Activated CD4-positive, alpha-beta memory T cell treated with anti-CD3 and anti-CD28 coated beads for 36 hours (primary cell): ENCODE measurements at regions of chr7 and their contacts with region 1.

Region 1: GRCh38 chr7:38215735-38216670 is 38.0 kb downstream of the STARD3NL start:
- DNase-seq: peak; percentile 85
- H3K4me3 Mint-ChIP-seq: no peak overlapping the region
- H3K27ac Mint-ChIP-seq: no peak overlapping the region
- H3K4me1 Mint-ChIP-seq: peaks cover 43% of the 10 kb centered on the region
- H3K27me3 Mint-ChIP-seq: no peaks in the 10 kb centered on the region

Region 2: GRCh38 chr7:38052786-38053185 is 163.2 kb before region 1 on chr7:
- CTCF ChIA-PET with region 1: no interaction called
- POLR2A ChIA-PET with region 1: no interaction called
- intact Hi-C with region 1: no loop called
- DNase-seq: no peak
- H3K4me3 Mint-ChIP-seq: no peak overlapping the region
- H3K27ac Mint-ChIP-seq: no peak overlapping the region
- H3K4me1 Mint-ChIP-seq: no peaks in the 10 kb centered on the region
- H3K27me3 Mint-ChIP-seq: peaks cover 7% of the 10 kb centered on the region

Region 3: DNA sequence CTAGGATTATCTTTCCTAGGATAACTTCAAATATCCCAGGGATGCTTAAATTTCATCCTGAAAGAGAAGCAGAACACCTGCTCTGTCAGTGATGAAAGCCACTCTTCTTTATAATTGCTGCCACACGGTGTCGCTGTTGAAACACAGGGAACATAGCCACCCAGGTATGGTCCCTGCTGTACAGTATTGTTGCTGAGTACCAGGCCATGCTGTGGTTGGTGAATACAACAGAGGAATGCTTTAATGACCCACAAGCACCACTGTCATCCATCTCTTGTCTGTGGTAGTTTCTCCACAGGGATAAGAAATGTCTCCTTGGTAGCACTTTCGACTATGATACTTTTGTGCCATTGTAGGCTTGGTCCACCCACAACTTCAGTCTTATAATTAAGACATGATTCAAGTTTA is 108.5 kb before region 1 on chr7:
- CTCF ChIA-PET with region 1: interaction called, 98 read pairs
- POLR2A ChIA-PET with region 1: interaction called, 3 read pairs
- intact Hi-C with region 1: loop called (anchors 1 kb)
- DNase-seq: peak; percentile 73
- H3K4me3 Mint-ChIP-seq: no peak overlapping the region
- H3K27ac Mint-ChIP-seq: no peak overlapping the region
- H3K4me1 Mint-ChIP-seq: no peaks in the 10 kb centered on the region
- H3K27me3 Mint-ChIP-seq: peaks cover 13% of the 10 kb centered on the region

Region 4: DNA sequence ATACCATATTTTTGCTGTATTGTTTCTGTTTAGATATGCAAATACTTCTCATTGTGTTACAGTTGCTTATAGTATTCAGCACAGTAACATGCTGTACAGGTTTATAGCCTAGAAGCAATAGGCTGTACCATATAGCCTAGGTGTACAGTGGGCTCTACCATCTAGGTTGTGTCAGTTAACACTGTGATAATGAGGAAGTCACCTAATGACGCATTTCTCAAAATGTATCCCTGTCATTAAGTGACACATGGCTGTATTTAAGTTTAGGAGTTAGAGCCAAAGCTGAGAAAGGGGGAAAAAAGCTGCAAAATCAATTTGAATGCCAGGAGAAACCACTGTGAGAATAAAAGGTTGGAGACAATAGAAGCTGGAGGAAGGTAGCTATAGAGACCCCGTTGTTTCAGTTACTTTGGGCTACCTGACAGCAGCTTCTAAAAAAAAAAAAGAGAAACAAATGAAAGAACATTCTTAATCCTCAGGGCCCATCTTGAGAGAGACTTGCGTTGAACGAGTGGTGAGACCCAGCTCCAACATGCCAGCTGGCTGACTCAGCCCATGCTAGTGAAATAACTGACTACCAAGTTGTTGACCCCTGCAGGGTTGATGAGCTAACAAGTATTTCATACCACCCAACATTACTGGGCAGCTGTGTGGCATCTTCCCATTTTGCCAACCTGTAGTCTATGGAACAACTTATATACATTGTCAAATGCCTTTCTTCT is 29.2 kb before region 1 on chr7:
- CTCF ChIA-PET with region 1: interaction called, 31 read pairs
- POLR2A ChIA-PET with region 1: no interaction called
- intact Hi-C with region 1: no loop called
- DNase-seq: no peak
- H3K4me3 Mint-ChIP-seq: no peak overlapping the region
- H3K27ac Mint-ChIP-seq: no peak overlapping the region
- H3K4me1 Mint-ChIP-seq: peaks cover 33% of the 10 kb centered on the region
- H3K27me3 Mint-ChIP-seq: no peaks in the 10 kb centered on the region

Region 5: DNA sequence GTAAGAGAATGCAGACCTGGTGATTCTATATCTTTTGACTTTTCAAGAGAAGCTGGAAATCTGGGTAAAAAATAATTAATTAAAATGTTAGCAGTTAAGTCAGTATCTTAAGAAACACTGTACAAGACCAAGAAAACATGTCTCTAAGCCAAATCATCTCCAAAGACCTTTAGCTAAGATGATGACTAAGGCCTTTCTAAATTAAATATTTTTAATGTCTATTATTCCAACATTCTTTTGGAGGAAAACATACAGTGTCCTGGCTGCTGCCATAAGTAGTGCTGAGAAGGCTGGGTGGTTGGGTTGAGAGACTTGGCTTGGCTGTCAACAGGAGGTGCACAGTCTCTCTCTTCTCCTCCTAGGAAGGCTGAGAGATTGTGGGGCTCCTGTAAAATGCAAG is 17.6 kb before region 1 on chr7:
- CTCF ChIA-PET with region 1: interaction called, 56 read pairs
- POLR2A ChIA-PET with region 1: no interaction called
- intact Hi-C with region 1: no loop called
- DNase-seq: no peak
- H3K4me3 Mint-ChIP-seq: no peak overlapping the region
- H3K27ac Mint-ChIP-seq: no peak overlapping the region
- H3K4me1 Mint-ChIP-seq: peaks cover 16% of the 10 kb centered on the region
- H3K27me3 Mint-ChIP-seq: no peaks in the 10 kb centered on the region

Region 6: GRCh38 chr7:38318803-38319416 is 102.9 kb after region 1 on chr7:
- CTCF ChIA-PET with region 1: interaction called, 40 read pairs
- POLR2A ChIA-PET with region 1: no interaction called
- intact Hi-C with region 1: loop called (anchors 1 kb)
- DNase-seq: peak; percentile 30
- H3K4me3 Mint-ChIP-seq: peak overlapping the region; percentile 38
- H3K27ac Mint-ChIP-seq: peak overlapping the region; percentile 67
- H3K4me1 Mint-ChIP-seq: peaks cover 25% of the 10 kb centered on the region
- H3K27me3 Mint-ChIP-seq: no peaks in the 10 kb centered on the region

Region 7: GRCh38 chr7:38360776-38361175 is 144.8 kb after region 1 on chr7:
- CTCF ChIA-PET with region 1: interaction called, 233 read pairs
- POLR2A ChIA-PET with region 1: interaction called, 5 read pairs
- intact Hi-C with region 1: no loop called
- DNase-seq: no peak
- H3K4me3 Mint-ChIP-seq: peak overlapping the region; percentile 88
- H3K27ac Mint-ChIP-seq: peak overlapping the region; percentile 99
- H3K4me1 Mint-ChIP-seq: peaks cover 48% of the 10 kb centered on the region
- H3K27me3 Mint-ChIP-seq: no peaks in the 10 kb centered on the region

Region 8: GRCh38 chr7:38398725-38399321 is 182.8 kb after region 1 on chr7:
- CTCF ChIA-PET with region 1: interaction called, 10 read pairs
- POLR2A ChIA-PET with region 1: no interaction called
- intact Hi-C with region 1: no loop called
- DNase-seq: peak; percentile 52
- H3K4me3 Mint-ChIP-seq: no peak overlapping the region
- H3K27ac Mint-ChIP-seq: no peak overlapping the region
- H3K4me1 Mint-ChIP-seq: no peaks in the 10 kb centered on the region
- H3K27me3 Mint-ChIP-seq: peaks cover 8% of the 10 kb centered on the region